Activated CD8-positive, alpha-beta T cell treated with anti-CD3 and anti-CD28 coated beads for 36 hours (primary cell): ENCODE measurements at regions of chr11 and their contacts with region 1.

Region 1: GRCh38 chr11:67630228-67630942 is 648 bp upstream of the NUDT8 start:
- DNase-seq: peak; percentile 99
- ATAC-seq: peak; percentile 83
- H3K4me3 Mint-ChIP-seq: peak overlapping the region; percentile 72
- H3K27ac Mint-ChIP-seq: peak overlapping the region; percentile 93
- H3K4me1 Mint-ChIP-seq: peaks cover 7% of the 10 kb centered on the region
- H3K27me3 Mint-ChIP-seq: no peaks in the 10 kb centered on the region
- CTCF ChIP-seq: peak; percentile 83

Region 2: GRCh38 chr11:67606492-67607201 is 23.7 kb before region 1 on chr11 and contains the start of gene NDUFV1:
- CTCF ChIA-PET with region 1: interaction called, 6 read pairs
- POLR2A ChIA-PET with region 1: interaction called, 10 read pairs
- intact Hi-C with region 1: no loop called
- DNase-seq: peak; percentile 98
- ATAC-seq: peak; percentile 100
- H3K4me3 Mint-ChIP-seq: peak within 1 kb of the TSS; percentile 93
- H3K27ac Mint-ChIP-seq: peak within 1 kb of the TSS; percentile 88
- H3K4me1 Mint-ChIP-seq: peaks cover 15% of the 10 kb centered on the region
- H3K27me3 Mint-ChIP-seq: peaks cover 5% of the 10 kb centered on the region
- CTCF ChIP-seq: peak; percentile 40
- total RNA-seq, gene NDUFV1: 315 to 317 TPM

Region 3: GRCh38 chr11:67613960-67614715 is 16.2 kb before region 1 on chr11:
- CTCF ChIA-PET with region 1: interaction called, 89 read pairs
- POLR2A ChIA-PET with region 1: interaction called, 48 read pairs
- intact Hi-C with region 1: no loop called
- DNase-seq: peak; percentile 93
- ATAC-seq: peak; percentile 82
- H3K4me3 Mint-ChIP-seq: peak overlapping the region; percentile 77
- H3K27ac Mint-ChIP-seq: peak overlapping the region; percentile 99
- H3K4me1 Mint-ChIP-seq: peaks cover 26% of the 10 kb centered on the region
- H3K27me3 Mint-ChIP-seq: no peaks in the 10 kb centered on the region
- CTCF ChIP-seq: peak; percentile 61

Region 4: DNA sequence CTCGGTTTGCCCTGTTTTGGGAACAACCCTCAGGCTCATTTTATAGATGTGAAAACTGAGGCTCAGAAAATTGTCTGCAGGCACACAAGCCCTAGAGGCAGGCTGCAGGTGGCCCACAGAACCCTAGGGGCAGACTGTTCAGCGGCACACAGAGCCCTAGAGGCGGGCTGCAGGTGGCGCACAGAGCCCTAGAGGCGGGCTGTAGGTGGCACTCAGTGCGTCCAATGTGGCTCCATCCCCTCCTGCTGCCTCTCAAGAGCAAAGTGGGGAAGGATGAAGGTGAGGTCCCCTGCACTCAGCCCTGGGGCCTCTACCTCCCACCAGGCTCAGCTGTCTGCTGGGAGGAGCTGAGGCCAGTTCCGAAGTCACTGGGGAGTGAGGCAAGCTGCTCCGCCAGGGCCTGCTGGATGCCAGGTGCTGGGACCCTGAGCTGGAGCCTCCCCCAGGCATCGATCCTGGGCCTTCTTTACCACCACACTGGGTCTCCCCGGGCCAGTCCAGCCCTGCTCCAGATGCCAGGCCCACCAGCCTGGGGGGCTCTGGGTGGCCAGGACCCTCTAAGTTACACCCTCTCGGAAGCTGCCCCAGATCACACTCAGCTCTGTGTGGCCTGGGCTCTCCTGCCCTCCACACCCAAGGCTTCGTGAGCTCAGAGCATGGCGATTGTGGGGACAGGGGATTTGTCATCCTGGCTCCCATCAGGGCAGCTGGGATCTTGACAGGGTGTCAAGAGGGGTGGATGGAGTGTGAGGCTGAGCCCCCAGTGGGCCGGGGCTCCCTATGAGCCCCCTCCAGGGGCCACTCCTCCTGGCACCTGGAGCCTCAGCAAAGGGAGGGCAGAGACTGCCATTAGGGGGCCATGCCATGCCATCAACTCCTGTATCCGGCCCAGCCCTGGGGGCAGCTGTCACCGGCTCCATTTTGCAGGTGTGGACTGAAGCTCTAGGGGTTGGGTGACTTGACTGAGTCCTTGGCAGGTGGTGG is 18.0 kb after region 1 on chr11:
- CTCF ChIA-PET with region 1: interaction called, 127 read pairs
- POLR2A ChIA-PET with region 1: interaction called, 18 read pairs
- intact Hi-C with region 1: no loop called
- DNase-seq: peak; percentile 81
- ATAC-seq: peak; percentile 86
- H3K4me3 Mint-ChIP-seq: no peak overlapping the region
- H3K27ac Mint-ChIP-seq: no peak overlapping the region
- H3K4me1 Mint-ChIP-seq: peaks cover 51% of the 10 kb centered on the region
- H3K27me3 Mint-ChIP-seq: no peaks in the 10 kb centered on the region
- CTCF ChIP-seq: peak; percentile 69

Region 5: DNA sequence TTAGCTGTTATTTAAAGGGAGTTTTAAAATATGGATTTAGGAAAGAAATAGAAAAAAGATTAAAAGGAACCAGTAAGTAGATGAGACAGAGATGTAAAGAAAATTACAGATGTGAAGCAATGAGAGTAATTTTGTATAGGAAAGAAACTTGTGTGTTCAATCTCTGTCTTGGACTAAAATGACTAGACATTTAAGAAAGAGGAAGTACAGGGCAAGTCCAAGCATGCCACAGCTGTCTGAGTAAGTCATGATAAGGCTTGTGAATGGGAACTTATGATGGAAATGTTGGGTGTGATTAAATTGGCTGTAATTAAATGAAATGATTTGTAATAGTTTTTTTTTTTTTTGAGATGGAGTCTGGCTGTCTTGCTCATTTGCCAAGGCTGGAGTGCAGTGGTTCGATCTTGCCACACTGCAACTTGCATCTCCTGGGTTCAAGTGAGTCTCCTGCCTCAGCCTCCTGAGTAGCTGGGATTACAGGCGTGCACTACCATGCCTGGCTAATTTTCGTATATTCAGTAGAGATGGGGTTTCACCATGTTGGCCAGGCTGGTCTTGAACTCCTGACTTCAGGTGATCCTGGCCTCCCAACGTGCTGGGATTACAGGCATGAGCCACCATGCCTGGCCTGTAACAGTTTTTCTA is 26.0 kb after region 1 on chr11:
- CTCF ChIA-PET with region 1: interaction called, 127 read pairs
- POLR2A ChIA-PET with region 1: interaction called, 9 read pairs
- intact Hi-C with region 1: no loop called
- DNase-seq: no peak
- ATAC-seq: peak; percentile 42
- H3K4me3 Mint-ChIP-seq: no peak overlapping the region
- H3K27ac Mint-ChIP-seq: no peak overlapping the region
- H3K4me1 Mint-ChIP-seq: no peaks in the 10 kb centered on the region
- H3K27me3 Mint-ChIP-seq: no peaks in the 10 kb centered on the region
- CTCF ChIP-seq: no peak

Region 6: DNA sequence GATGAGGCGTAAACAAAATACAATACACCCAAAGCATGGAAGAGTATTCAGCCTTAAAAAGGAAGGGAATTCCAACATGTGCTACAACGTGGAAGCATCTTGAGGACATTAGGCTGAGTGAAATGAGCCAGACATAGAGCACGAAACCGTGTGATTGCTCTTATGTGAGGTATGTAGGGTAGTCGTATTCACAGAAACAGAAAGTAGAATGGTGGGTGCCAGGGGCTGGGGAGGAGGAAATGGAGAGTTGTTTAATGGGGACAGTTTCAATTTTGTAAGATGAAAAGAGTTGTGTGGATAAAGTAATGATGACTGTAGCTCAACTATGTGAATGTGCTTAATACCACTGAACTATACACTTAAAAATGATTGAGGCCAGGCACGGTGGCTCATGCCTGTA is 592.9 kb after region 1 on chr11:
- CTCF ChIA-PET with region 1: no interaction called
- POLR2A ChIA-PET with region 1: no interaction called
- intact Hi-C with region 1: no loop called
- DNase-seq: no peak
- ATAC-seq: peak; percentile 37
- H3K4me3 Mint-ChIP-seq: no peak overlapping the region
- H3K27ac Mint-ChIP-seq: no peak overlapping the region
- H3K4me1 Mint-ChIP-seq: peaks cover 3% of the 10 kb centered on the region
- H3K27me3 Mint-ChIP-seq: no peaks in the 10 kb centered on the region
- CTCF ChIP-seq: no peak